ENCODE measurements at regions of chr4 and their contacts with region 1.

Region 1: GRCh38 chr4:4726051-4726450 is 133.4 kb upstream of the MSX1 start:
- DNase-seq: no peak
- H3K4me3 ChIP-seq: no peak overlapping the region
- H3K27ac ChIP-seq: no peak overlapping the region
- H3K4me1 ChIP-seq: no peaks in the 10 kb centered on the region; a peak in 1 of 7 replicates
- H3K27me3 ChIP-seq: no peaks in the 10 kb centered on the region; a peak in 1 of 7 replicates
- CTCF ChIP-seq: peak; percentile 41 to 73 (median 58); a peak in 3 of 4 replicates
- EP300 ChIP-seq: no peak
- POLR2A ChIP-seq: no peak
- RAD21 ChIP-seq: peak in 1 of 2 experiments; percentile 22; a peak in 1 of 4 replicates

Region 2: DNA sequence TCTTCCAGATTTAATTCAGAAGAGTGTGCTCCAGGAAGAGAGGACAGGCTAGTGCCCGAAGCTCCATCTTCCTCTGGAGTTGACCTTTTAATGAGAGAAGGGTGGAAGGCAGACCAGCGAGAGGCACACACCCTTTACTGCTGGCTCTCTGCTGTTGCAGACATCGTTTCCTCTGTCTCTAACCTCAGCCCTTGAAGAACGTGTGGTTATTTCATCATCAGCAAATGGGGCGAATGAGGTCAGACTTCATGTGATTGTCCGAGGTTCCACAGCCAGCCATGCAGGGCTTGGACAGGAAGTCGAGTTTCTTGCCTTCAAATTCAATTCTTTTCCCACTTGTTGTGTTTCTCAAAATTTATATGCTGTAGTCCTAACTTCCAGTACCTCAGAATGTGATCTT is 21.8 kb before region 1 on chr4:
- CTCF ChIA-PET with region 1: interaction called, 11 read pairs
- POLR2A ChIA-PET with region 1: no interaction called
- DNase-seq: no peak
- H3K4me3 ChIP-seq: no peak overlapping the region
- H3K27ac ChIP-seq: no peak overlapping the region
- H3K4me1 ChIP-seq: no peaks in the 10 kb centered on the region
- H3K27me3 ChIP-seq: no peaks in the 10 kb centered on the region; a peak in 1 of 7 replicates
- CTCF ChIP-seq: no peak
- EP300 ChIP-seq: no peak
- POLR2A ChIP-seq: no peak
- RAD21 ChIP-seq: no peak

Region 3: GRCh38 chr4:4714331-4714730 is 11.7 kb before region 1 on chr4:
- CTCF ChIA-PET with region 1: interaction called, 10 read pairs
- POLR2A ChIA-PET with region 1: no interaction called
- DNase-seq: no peak
- H3K4me3 ChIP-seq: no peak overlapping the region
- H3K27ac ChIP-seq: no peak overlapping the region
- H3K4me1 ChIP-seq: peaks cover 0 to 6% (median 3%) of the 10 kb centered on the region in 4 experiments; a peak in 4 of 7 replicates
- H3K27me3 ChIP-seq: peaks cover 0 to 3% (median 2%) of the 10 kb centered on the region in 4 experiments; a peak in 3 of 7 replicates
- CTCF ChIP-seq: no peak
- EP300 ChIP-seq: no peak
- POLR2A ChIP-seq: no peak
- RAD21 ChIP-seq: no peak

Measured in H1 (cell line).